BJ (cell line): ENCODE measurements at regions of chr4 and their contacts with region 1.

Region 1: GRCh38 chr4:168585168-168586091 is 88.6 kb downstream of the PALLD start:
- DNase-seq: no peak
- H3K4me3 ChIP-seq: no peak overlapping the region
- H3K27me3 ChIP-seq: no peaks in the 10 kb centered on the region
- CTCF ChIP-seq: peak; percentile 81

Region 2: DNA sequence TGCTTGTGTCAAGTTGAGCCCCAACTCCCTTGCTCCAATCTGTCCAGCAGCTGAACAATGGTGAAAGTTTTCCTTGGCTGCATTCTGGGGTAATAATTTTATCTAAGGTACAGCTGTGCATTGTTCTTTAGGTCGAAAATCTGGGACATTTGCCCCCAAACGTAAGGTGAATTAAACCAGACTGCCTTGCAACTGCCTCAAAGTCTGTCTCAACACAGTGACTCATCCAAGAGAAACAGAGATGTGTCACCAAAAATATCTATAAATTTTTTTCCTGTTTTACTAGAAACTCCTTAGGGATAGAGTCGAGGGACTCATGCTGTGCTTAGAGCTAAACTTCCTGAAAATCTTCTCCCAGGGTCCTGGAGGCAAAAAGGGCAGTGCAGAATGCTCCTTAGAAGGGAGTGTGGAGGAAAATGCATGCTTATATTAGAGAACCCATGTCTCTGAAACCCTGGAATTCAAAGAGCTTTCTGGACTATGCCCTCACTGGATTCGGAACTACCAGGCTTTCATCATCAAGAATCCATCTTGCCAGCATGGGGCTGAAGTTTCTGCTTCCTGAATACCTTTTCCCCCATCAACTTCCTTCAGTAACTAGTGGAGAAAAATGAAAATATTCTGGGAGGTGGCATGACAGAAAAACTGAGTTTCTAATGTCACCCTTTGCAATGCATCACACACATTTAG is 27.2 kb after region 1 on chr4:
- CTCF ChIA-PET with region 1: interaction called, 10 read pairs
- POLR2A ChIA-PET with region 1: no interaction called
- DNase-seq: no peak
- H3K4me3 ChIP-seq: no peak overlapping the region
- H3K27me3 ChIP-seq: no peaks in the 10 kb centered on the region
- CTCF ChIP-seq: no peak

Region 3: GRCh38 chr4:168636506-168637196 is 51.2 kb after region 1 on chr4:
- CTCF ChIA-PET with region 1: interaction called, 14 read pairs
- POLR2A ChIA-PET with region 1: no interaction called
- DNase-seq: peak; percentile 57
- H3K4me3 ChIP-seq: no peak overlapping the region
- H3K27me3 ChIP-seq: peaks cover 11% of the 10 kb centered on the region
- CTCF ChIP-seq: no peak

Region 4: DNA sequence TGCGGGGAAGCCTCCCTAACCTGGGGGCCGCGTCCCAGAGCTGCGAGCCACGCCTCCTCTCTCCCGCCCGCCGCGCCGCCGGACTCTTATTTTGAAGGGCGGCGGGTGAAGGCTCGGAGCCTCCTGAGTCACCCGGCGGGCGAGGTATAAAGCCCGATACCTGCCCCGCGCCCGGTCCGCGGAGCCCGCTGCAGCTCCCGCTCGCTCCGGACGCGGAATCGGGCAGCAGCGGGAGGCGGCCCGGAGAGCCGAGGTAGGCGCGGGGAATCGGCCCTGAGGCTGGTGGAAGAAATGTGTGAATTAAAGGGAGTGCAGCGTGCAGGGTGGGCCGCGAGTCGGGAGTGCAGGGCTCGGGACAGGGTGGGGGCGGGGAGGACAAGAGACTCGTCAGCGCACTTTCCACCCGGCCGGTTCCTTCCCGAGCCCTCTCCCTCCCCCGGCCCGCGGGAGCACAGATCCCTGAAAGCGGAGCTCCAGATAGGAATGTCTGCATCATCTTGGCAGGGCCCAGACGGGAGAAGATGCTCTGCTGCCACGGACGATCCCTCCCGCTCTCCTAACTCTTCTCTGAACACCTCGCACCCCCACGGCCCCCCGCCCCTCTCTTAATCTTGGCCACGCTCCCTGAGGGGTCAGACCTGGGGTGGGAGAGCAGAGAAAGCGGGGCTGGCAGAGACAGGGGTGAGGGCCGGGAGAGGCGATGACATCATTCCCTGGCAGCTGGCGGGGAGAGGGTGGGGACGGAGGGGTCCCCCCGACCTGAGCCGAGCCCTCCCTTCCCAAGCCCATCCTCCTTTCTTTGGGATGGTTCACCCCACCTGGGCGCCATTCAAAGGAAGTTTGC is 246.7 kb after region 1 on chr4:
- CTCF ChIA-PET with region 1: interaction called, 18 read pairs
- POLR2A ChIA-PET with region 1: no interaction called
- DNase-seq: no peak
- H3K4me3 ChIP-seq: peak overlapping the region; percentile 95
- H3K27me3 ChIP-seq: no peaks in the 10 kb centered on the region
- CTCF ChIP-seq: no peak

Region 5: DNA sequence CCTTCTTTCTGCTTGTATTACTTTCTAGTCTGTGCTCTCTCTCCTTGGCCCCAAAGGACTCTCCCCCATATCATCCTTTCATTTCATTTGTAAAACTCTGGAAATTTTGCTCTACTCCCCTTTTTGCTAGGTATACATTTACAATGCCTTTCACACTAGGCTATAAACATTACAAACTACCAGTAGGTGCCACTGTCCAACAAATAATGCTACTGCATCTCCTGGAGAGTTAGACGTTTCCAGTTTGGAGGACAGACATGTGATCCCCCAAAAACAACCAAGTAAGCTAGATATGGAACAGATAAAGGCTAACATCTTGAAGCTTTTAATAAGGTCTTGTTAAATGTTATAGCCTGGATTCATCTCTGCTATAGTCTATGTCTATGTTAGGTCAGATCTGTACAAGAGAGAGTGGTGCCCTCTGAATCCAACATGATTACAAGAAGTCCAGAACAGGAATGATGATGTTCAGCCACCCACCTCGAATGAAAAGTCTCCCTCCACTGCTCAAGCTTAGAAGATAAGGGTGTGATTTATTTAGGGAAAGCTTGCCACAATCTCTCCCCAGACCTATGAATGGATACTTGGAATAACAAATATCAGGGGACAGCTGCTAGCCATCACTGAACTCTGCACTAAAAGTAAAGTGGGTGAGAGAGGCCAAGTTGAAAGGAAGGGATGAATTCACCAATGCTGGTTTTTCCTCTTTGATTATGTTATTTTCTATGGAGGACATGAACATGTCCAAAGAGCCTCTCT is 410.3 kb after region 1 on chr4:
- CTCF ChIA-PET with region 1: no interaction called
- POLR2A ChIA-PET with region 1: no interaction called
- DNase-seq: no peak
- H3K4me3 ChIP-seq: no peak overlapping the region
- H3K27me3 ChIP-seq: no peaks in the 10 kb centered on the region
- CTCF ChIP-seq: 0 out of 2 replicates have a peak, but pooled peaks have one; percentile 17